Ovary (tissue), 10 donors: ENCODE measurements at regions of chr16 and their contacts with region 1.

Region 1: GRCh38 chr16:66406534-66407221 is 20.4 kb upstream of the BEAN1 start:
- DNase-seq: peak; percentile 81 to 92 (median 90)
- H3K4me3 ChIP-seq: peak overlapping the region; percentile 41
- H3K27ac ChIP-seq: no peak overlapping the region
- H3K4me1 ChIP-seq: peaks cover 2% of the 10 kb centered on the region
- H3K27me3 ChIP-seq: no peaks in the 10 kb centered on the region
- CTCF ChIP-seq: peak; percentile 84 to 94 (median 93)
- EP300 ChIP-seq: no peak
- POLR2A ChIP-seq: no peak

Region 2: GRCh38 chr16:66335704-66336329 is 70.9 kb before region 1 on chr16:
- intact Hi-C with region 1: no loop called
- DNase-seq: peak; percentile 29 to 67 (median 60)
- H3K4me3 ChIP-seq: no peak overlapping the region
- H3K27ac ChIP-seq: no peak overlapping the region
- H3K4me1 ChIP-seq: peaks cover 3% of the 10 kb centered on the region
- H3K27me3 ChIP-seq: no peaks in the 10 kb centered on the region
- CTCF ChIP-seq: no peak
- EP300 ChIP-seq: no peak
- POLR2A ChIP-seq: no peak

Region 3: DNA sequence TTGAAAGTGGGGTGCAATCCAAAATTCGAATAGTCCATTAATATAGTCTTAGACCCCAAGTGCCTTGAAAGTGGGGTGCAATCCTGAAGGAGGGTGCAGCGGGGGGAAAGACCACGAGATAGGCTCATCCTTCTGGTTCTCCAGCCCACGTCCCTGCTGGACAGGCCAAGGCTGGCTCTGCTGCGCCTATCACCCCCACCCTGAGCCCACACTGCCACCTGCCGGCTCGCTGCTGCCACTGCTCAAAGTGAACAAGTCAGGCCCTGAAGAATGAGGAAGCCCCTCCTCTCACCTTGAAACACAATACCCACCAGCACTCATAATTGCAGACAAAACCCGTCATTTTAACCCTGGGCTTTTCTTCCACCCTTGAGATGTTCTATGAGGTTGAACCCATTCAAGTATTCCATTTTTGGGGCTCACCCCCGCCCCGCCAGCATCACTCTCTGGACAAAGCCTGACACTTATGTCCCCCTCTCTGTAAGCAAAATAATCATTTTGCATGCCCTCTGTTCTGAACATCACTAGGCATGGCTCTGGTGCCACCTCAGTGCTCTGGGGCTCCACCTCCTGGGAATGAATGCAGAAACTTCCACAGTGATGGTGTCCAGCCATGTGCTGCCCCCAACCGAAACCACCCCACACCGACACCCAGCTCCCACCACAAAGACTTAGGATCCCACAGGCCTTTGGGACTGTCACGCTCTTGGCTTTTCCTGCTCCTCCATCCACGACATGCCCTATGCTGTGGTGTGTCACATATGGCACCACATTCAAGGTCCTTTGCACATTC is 77.2 kb after region 1 on chr16:
- intact Hi-C with region 1: loop called (anchors 5 to 10 kb)
- DNase-seq: peak; percentile 67 to 85 (median 79)
- H3K4me3 ChIP-seq: no peak overlapping the region
- H3K27ac ChIP-seq: no peak overlapping the region
- H3K4me1 ChIP-seq: no peaks in the 10 kb centered on the region
- H3K27me3 ChIP-seq: no peaks in the 10 kb centered on the region
- CTCF ChIP-seq: peak; percentile 72 to 86 (median 85)
- EP300 ChIP-seq: no peak
- POLR2A ChIP-seq: no peak

Region 4: GRCh38 chr16:66740010-66740409 is 333.3 kb after region 1 on chr16:
- intact Hi-C with region 1: loop called in 1 of 4 experiments (anchors 10 kb)
- DNase-seq: no peak
- H3K4me3 ChIP-seq: no peak overlapping the region
- H3K27ac ChIP-seq: no peak overlapping the region
- H3K4me1 ChIP-seq: peaks cover 2% of the 10 kb centered on the region
- H3K27me3 ChIP-seq: no peaks in the 10 kb centered on the region
- CTCF ChIP-seq: no peak
- EP300 ChIP-seq: no peak
- POLR2A ChIP-seq: no peak

Region 5: DNA sequence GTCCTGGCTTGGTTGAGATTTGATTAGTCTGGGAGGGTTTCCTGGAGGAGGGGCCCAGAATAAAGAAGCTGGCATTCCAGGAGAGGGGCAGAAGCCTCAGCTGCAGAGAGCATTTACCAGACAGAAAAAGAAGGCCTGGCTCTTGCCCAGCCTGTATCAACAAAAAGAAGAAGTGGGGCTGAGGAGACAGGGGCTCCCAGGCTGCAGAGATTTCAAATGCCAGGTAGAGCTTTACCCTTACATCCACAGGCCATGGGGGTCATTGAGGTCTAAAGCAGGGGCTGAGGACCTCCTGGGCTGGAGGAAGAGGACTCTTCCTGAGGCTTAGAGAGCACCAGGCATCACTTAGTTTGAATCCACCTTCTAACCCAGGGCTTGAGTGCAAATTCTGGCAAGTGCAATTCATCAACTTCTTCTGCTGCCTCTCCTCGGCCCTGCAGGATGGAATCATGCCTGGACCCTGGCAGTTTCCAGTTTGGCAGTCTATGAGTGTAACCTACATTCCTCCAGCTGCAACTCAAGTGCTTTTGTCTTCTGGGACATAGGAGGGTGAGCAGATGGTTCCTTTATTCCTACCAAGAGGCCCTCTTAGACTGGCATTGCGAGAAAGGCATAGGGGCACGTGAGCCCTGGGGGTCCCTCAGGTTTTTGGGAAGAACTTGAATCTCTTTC is 452.9 kb after region 1 on chr16:
- intact Hi-C with region 1: loop called in 1 of 4 experiments (anchors 10 kb)
- DNase-seq: no peak
- H3K4me3 ChIP-seq: no peak overlapping the region
- H3K27ac ChIP-seq: no peak overlapping the region
- H3K4me1 ChIP-seq: no peaks in the 10 kb centered on the region
- H3K27me3 ChIP-seq: no peaks in the 10 kb centered on the region
- CTCF ChIP-seq: no peak
- EP300 ChIP-seq: no peak
- POLR2A ChIP-seq: no peak

Region 6: DNA sequence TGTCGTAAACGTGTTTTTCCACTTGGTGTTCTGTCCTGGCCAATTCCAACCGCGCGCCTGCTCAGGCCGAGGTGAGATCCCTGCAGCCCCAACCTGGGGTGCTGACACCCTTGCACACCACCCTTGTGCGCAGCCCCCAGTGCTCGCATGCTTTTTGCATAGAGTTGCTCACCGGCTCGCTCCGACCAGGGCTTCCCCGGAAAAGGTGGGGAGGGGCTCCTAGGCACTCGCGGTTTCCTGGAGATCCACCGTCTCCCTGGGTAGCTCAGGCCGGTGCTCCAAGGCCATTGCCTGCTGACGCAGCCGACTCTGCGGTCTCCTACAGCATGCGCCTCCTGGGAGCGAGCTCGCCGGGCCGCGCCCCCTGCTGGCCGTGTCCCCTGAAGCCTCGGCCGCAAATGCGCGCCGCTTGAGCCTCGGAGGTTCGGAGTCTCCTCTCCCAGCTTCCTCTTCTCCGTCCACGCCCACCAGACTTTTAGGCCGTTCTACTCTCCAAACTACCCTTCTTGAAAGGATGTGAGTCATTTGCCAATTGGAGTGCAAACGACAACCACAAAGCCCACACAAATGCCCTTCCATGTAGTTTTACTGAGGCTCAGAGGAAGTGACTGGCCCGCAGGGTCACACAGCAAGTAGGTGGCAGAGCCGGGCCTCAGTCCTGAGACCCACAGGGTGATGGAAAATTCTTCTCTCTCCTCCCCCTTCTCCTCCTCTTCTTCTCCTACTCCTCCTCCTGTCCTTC is 466.4 kb after region 1 on chr16:
- intact Hi-C with region 1: loop called in 3 of 4 experiments (anchors 5 to 10 kb)
- DNase-seq: peak; percentile 90 to 94 (median 92)
- H3K4me3 ChIP-seq: peak overlapping the region; percentile 23
- H3K27ac ChIP-seq: peak overlapping the region; percentile 60 to 67
- H3K4me1 ChIP-seq: peaks cover 3% of the 10 kb centered on the region
- H3K27me3 ChIP-seq: no peaks in the 10 kb centered on the region
- CTCF ChIP-seq: peak; percentile 83 to 93 (median 88)
- EP300 ChIP-seq: no peak
- POLR2A ChIP-seq: no peak